Ascending aorta (tissue), 2 donors: ENCODE measurements at regions of chr4 and their contacts with region 1.

Region 1: GRCh38 chr4:122827879-122828601 is 1.4 kb downstream of the FGF2 start:
- DNase-seq: peak in 1 of 2 donors; percentile 69
- H3K4me3 ChIP-seq: peak overlapping the region; percentile 75 to 88
- H3K27ac ChIP-seq: peak overlapping the region; percentile 95 to 96
- H3K4me1 ChIP-seq: peaks cover 4 to 17% of the 10 kb centered on the region in 2 donors
- H3K27me3 ChIP-seq: no peaks in the 10 kb centered on the region
- CTCF ChIP-seq: peak; percentile 26 to 40 (median 28)

Region 2: DNA sequence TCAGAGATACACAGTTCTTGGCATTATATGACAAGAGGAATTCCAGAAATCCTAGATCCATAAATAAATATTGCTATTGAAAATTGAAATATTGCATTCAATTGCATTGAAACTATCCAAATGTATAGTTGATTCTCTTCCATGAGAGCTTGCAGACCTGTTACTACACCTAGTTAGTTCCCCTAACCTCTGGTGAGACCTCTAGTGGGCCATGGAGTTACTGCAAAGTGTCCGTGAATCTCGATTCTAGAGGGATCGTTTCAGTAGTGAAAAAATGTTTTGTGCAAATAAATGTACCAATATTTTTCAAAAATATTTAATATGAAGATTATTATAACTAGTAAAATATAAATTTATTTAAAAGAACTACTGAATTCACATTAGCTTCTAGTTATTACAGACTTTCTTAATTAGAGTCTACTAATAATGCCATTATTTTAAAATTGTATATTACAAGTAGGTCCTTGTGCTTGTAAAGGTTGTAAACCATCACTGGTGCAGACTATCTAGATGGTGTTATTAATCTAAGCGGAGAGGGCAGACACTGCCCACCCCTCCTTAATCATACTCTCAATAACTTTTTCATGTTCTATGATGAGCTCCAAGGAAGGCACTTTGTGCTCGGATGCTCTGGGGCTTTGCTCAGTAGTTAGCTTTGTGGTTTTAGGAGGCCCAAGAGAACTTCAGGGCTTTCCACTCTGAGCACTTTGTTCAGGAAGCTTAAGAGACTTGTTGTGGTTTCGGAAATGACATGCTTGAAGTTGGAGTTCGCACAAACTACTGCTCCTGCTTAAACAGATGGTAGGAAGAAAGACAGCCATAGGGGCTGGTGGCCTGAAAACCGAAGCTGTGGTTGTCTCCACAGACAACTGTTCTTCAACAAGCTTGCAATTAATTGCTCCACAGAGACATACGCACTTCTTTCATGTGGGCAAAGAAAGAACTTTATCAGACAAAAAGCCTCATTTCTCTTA is 249.9 kb before region 1 on chr4:
- intact Hi-C with region 1: no loop called
- DNase-seq: no peak
- H3K4me3 ChIP-seq: no peak overlapping the region
- H3K27ac ChIP-seq: no peak overlapping the region
- H3K4me1 ChIP-seq: no peaks in the 10 kb centered on the region
- H3K27me3 ChIP-seq: no peaks in the 10 kb centered on the region
- CTCF ChIP-seq: peak in 2 of 3 experiments; percentile 48 to 56

Region 3: DNA sequence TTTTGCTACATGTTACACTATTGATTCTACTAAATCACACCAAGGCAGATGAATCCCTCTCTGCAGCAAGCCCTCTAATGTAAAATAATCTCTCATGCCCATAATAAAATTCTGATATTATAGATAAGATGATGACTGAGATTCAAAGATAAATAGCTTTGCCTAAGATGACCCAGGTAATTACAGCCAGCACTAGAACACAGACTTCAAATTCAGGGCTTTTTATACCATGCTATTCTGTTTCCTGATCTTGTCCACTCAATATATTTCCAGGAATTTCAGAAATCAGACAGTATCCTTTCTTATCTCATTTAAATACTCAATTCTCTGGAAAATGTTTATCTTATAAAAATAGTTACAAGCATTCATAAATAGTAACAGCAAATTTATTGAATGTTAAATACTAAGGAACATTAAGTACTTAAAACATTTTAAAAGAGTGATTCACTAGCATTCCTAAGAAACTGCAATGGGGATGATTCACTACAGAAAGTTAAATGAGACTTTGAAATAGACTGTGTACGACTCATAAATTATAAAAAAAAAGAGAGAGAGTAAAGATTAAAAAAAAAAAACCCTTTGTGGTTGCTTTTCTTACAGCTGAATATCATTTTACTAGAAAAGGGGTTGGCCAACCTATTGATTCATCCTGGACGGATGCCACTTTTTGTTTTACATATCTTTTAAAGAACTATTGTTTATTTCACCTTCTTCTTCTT is 161.4 kb before region 1 on chr4:
- intact Hi-C with region 1: loop called (anchors 10 kb)
- DNase-seq: no peak
- H3K4me3 ChIP-seq: no peak overlapping the region
- H3K27ac ChIP-seq: peak overlapping the region; percentile 50 to 53
- H3K4me1 ChIP-seq: peaks cover 0 to 13% of the 10 kb centered on the region in 2 donors
- H3K27me3 ChIP-seq: no peaks in the 10 kb centered on the region
- CTCF ChIP-seq: no peak

Region 4: GRCh38 chr4:122732329-122733026 is 95.6 kb before region 1 on chr4 and contains the start of gene BBS12:
- intact Hi-C with region 1: loop called (anchors 2 kb)
- DNase-seq: peak; percentile 95 to 100
- H3K4me3 ChIP-seq: peak within 1 kb of the TSS; percentile 84
- H3K27ac ChIP-seq: peak within 1 kb of the TSS; percentile 86 to 89
- H3K4me1 ChIP-seq: peaks cover 0 to 10% of the 10 kb centered on the region in 2 donors
- H3K27me3 ChIP-seq: no peaks in the 10 kb centered on the region
- CTCF ChIP-seq: peak in 2 of 3 experiments; percentile 46 to 48
- total RNA-seq, gene BBS12: not detected

Region 5: GRCh38 chr4:122758033-122758432 is 70.0 kb before region 1 on chr4:
- intact Hi-C with region 1: loop called (anchors 5 kb)
- DNase-seq: no peak
- H3K4me3 ChIP-seq: no peak overlapping the region
- H3K27ac ChIP-seq: no peak overlapping the region
- H3K4me1 ChIP-seq: no peaks in the 10 kb centered on the region
- H3K27me3 ChIP-seq: no peaks in the 10 kb centered on the region
- CTCF ChIP-seq: peak; percentile 51 to 82 (median 64)

Region 6: GRCh38 chr4:122783301-122784215 is 44.5 kb before region 1 on chr4:
- intact Hi-C with region 1: loop called (anchors 5 kb)
- DNase-seq: peak; percentile 12 to 90
- H3K4me3 ChIP-seq: peak overlapping the region in 1 of 2 donors; percentile 6
- H3K27ac ChIP-seq: peak overlapping the region; percentile 53 to 57
- H3K4me1 ChIP-seq: peaks cover 0 to 11% of the 10 kb centered on the region in 2 donors
- H3K27me3 ChIP-seq: no peaks in the 10 kb centered on the region
- CTCF ChIP-seq: no peak

Region 7: GRCh38 chr4:122898370-122899150 is 70.5 kb after region 1 on chr4:
- intact Hi-C with region 1: loop called (anchors 2 kb)
- DNase-seq: peak in 1 of 2 donors; percentile 85
- H3K4me3 ChIP-seq: no peak overlapping the region
- H3K27ac ChIP-seq: peak overlapping the region; percentile 60 to 78
- H3K4me1 ChIP-seq: peaks cover 0 to 46% of the 10 kb centered on the region in 2 donors
- H3K27me3 ChIP-seq: no peaks in the 10 kb centered on the region
- CTCF ChIP-seq: no peak

Region 8: GRCh38 chr4:122922877-122923511 is 95.0 kb after region 1 on chr4:
- intact Hi-C with region 1: loop called (anchors 5 kb)
- DNase-seq: peak in 1 of 2 donors; percentile 92
- H3K4me3 ChIP-seq: peak overlapping the region; percentile 76 to 85
- H3K27ac ChIP-seq: peak overlapping the region; percentile 71 to 77
- H3K4me1 ChIP-seq: peaks cover 4 to 12% of the 10 kb centered on the region in 2 donors
- H3K27me3 ChIP-seq: no peaks in the 10 kb centered on the region
- CTCF ChIP-seq: peak in 1 of 3 experiments; percentile 5